ENCODE measurements at regions of chr7 and their contacts with region 1.

Region 1: GRCh38 chr7:130988443-130988842 is 254.4 kb upstream of the KLF14 start:
- DNase-seq: no peak
- H3K4me3 ChIP-seq: no peak overlapping the region
- H3K27ac ChIP-seq: no peak overlapping the region
- H3K4me1 ChIP-seq: peaks cover 0 to 27% of the 10 kb centered on the region in 2 donors
- H3K27me3 ChIP-seq: no peaks in the 10 kb centered on the region
- CTCF ChIP-seq: no peak

Region 2: DNA sequence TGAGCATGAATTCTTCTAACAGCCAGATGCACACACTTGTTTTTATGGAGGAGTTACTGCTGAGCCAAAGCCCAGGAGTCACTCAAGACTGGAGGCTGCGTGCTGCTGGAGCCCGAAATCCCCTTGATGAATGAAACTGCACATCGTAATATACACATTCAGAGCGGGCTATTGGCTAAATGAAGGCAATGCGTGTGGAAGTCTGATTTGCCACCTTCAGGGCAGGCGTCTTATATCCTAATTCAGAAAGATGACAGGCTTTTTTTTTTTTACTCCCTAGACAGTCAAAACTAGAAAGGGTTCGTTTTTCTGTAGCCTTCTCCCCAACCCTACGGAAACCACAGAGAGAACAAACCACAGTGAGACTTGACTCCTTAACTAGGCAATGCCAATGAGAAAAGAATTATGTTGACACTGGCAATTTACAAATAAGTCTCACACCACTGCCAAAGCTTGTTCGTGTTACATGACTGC is 27.3 kb before region 1 on chr7:
- intact Hi-C with region 1: no loop called
- DNase-seq: no peak
- H3K4me3 ChIP-seq: no peak overlapping the region
- H3K27ac ChIP-seq: peak overlapping the region; percentile 8 to 30
- H3K4me1 ChIP-seq: peaks cover 9 to 19% of the 10 kb centered on the region in 2 donors
- H3K27me3 ChIP-seq: no peaks in the 10 kb centered on the region
- CTCF ChIP-seq: no peak

Region 3: GRCh38 chr7:131007394-131008330 is 19.2 kb after region 1 on chr7:
- intact Hi-C with region 1: loop called (anchors 2 kb)
- DNase-seq: peak in 1 of 2 donors; percentile 79
- H3K4me3 ChIP-seq: no peak overlapping the region
- H3K27ac ChIP-seq: peak overlapping the region; percentile 75 to 79
- H3K4me1 ChIP-seq: peaks cover 11 to 37% of the 10 kb centered on the region in 2 donors
- H3K27me3 ChIP-seq: no peaks in the 10 kb centered on the region
- CTCF ChIP-seq: peak; percentile 46 to 66 (median 55)

Region 4: DNA sequence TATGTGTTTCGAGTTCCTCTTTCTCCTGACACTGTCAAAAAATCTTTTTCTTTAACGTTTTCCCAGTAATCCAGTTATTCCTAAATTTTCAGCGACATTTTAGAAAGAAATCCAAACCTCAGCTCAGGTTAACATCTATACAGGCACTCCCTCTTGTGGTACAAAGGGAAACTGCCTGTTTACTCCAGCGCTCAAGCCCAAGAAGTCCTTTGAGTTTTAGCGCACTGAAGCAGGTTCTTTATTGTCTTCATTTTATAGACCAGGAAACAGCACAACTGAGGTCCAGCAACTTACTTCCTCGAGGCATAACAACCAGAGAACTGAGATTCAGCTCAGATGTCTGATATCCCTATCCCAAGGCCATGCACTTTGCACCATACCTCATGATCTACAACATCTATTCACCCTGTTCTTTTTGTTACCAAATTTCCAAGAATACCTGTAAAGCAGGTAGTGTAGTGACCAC is 52.1 kb after region 1 on chr7:
- intact Hi-C with region 1: loop called (anchors 5 kb)
- DNase-seq: no peak
- H3K4me3 ChIP-seq: no peak overlapping the region
- H3K27ac ChIP-seq: peak overlapping the region; percentile 31 to 50
- H3K4me1 ChIP-seq: peaks cover 4 to 20% of the 10 kb centered on the region in 2 donors
- H3K27me3 ChIP-seq: no peaks in the 10 kb centered on the region
- CTCF ChIP-seq: peak; percentile 80 to 87 (median 84)

Region 5: GRCh38 chr7:131302876-131303707 is 314.6 kb after region 1 on chr7:
- intact Hi-C with region 1: no loop called
- DNase-seq: no peak
- H3K4me3 ChIP-seq: no peak overlapping the region
- H3K27ac ChIP-seq: no peak overlapping the region
- H3K4me1 ChIP-seq: peaks cover 0 to 2% of the 10 kb centered on the region in 2 donors
- H3K27me3 ChIP-seq: no peaks in the 10 kb centered on the region
- CTCF ChIP-seq: peak; percentile 26 to 60 (median 40)